A549 (cell line): ENCODE measurements at regions of chr10 and their contacts with region 1.

Region 1: GRCh38 chr10:110610308-110610774 is 33.8 kb upstream of the RBM20 start:
- DNase-seq: peak; percentile 50 to 58
- ATAC-seq: peak; percentile 73 to 80
- H3K4me3 ChIP-seq: no peak overlapping the region
- H3K27ac ChIP-seq: peak overlapping the region in 1 of 2 experiments; percentile 8; a peak in 2 of 6 replicates
- H3K4me1 ChIP-seq: 0 out of 3 replicates have a peak, but pooled peaks cover 8% of the 10 kb centered on the region
- CTCF ChIP-seq: peak; percentile 95
- EP300 ChIP-seq: no peak
- POLR2A ChIP-seq: no peak
- RAD21 ChIP-seq: peak; percentile 96 to 97

Region 2: DNA sequence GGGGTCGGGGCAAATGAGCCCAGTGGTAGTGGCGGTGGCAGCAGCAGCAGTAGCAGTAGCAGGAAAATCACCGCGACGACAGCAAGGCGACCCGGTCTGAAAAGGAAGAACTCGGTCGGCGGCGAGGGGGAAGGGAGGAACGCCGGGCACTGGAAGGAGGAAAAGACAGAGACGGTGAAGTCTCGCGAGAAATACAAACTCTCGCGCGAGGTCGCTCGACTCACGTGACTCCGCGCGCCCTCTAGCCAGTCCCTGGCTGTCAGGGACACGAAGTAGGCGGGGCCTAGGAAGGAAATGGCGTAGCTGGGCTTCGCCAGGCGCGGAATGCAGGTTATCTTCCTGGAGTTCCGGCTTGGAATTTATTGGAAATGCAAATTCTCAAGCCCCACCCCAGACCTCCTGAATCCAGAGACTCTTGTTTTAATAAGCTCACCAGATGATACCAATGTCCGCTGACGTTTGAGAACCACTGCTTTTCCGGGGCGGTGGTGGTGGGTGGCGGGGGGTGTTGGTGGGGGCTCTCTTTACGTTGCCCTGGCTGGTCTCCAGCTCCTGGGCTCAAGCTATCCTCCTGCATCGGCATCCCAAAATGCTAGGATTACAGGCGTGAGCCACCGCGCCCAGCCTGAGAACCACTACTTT is 305.4 kb before region 1 on chr10 and contains the start of gene SMNDC1:
- CTCF ChIA-PET with region 1: interaction called, 12 read pairs
- POLR2A ChIA-PET with region 1: interaction called, 15 read pairs
- DNase-seq: peak; percentile 86 to 99
- ATAC-seq: peak; percentile 91 to 95
- H3K4me3 ChIP-seq: peak within 1 kb of the TSS; percentile 93
- H3K27ac ChIP-seq: peak within 1 kb of the TSS; percentile 97 to 98
- H3K4me1 ChIP-seq: peaks cover 57% of the 10 kb centered on the region
- CTCF ChIP-seq: no peak
- EP300 ChIP-seq: no peak
- POLR2A ChIP-seq: peak; percentile 28; the same call in 1 of the 2 replicates
- RAD21 ChIP-seq: no peak; a peak in 1 of 5 replicates
- polyA plus RNA-seq, gene SMNDC1: 35.4 and 40.2 TPM in 2 replicates

Region 3: DNA sequence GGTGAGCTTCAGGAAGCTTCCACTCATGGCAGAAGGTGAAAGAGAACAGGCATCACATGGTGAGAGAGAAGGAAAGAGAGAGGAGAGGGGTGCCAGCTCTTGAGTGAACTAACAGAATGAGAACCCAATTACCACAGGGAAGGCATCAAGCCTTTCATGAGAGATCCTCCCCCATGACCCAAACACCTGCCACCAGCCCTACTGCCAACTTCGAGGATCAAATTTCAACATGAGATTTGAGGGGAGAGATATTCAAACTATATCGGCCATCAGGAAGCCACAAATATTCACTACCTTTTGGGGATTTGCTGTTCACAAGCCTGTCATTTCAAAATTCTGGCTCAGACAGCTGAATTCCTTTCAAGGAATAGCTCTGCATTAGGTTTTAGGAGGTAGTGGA is 265.7 kb before region 1 on chr10:
- CTCF ChIA-PET with region 1: no interaction called
- POLR2A ChIA-PET with region 1: no interaction called
- DNase-seq: no peak
- ATAC-seq: no peak
- H3K4me3 ChIP-seq: no peak overlapping the region
- H3K27ac ChIP-seq: peak overlapping the region in 1 of 2 experiments; percentile 45; a peak in 2 of 6 replicates
- H3K4me1 ChIP-seq: no peaks in the 10 kb centered on the region
- CTCF ChIP-seq: no peak
- EP300 ChIP-seq: no peak
- POLR2A ChIP-seq: no peak
- RAD21 ChIP-seq: no peak

Region 4: DNA sequence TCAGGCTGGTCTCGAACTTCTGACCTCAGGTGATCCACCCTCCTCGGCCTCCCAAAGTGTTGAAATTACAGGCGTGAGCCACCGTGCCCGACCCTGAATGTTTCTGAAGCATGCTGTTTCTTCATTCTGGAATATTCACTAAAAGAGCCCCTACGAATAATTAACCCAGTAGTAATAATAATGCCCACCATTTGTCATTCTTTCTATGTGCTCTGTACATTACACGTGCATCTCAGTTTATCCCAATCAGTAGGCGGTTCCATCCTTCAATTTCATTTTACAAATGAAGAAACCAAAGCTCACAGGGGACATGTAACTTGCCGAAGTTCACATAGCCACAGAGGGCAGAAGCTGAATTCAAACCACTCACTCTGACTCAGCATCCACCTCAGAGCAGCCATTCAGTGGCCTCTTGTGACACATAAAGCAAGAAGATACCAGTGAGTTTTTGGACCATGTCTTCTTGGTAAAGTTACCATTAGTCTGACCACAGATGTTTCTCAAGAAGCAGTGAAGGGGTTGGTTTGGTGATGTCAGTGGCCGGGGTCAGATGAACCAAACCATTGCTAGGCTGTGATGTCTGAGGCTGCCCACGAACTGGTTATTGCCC is 184.6 kb before region 1 on chr10:
- CTCF ChIA-PET with region 1: no interaction called
- POLR2A ChIA-PET with region 1: no interaction called
- DNase-seq: peak; percentile 76 to 97
- ATAC-seq: peak; percentile 69 to 70
- H3K4me3 ChIP-seq: no peak overlapping the region
- H3K27ac ChIP-seq: peak overlapping the region; percentile 96 to 99
- H3K4me1 ChIP-seq: peaks cover 96% of the 10 kb centered on the region
- CTCF ChIP-seq: no peak
- EP300 ChIP-seq: peak in 1 of 2 experiments; percentile 30; a peak in 1 of 5 replicates
- POLR2A ChIP-seq: no peak
- RAD21 ChIP-seq: no peak; a peak in 1 of 5 replicates

Region 5: GRCh38 chr10:110446954-110447608 is 163.3 kb before region 1 on chr10:
- CTCF ChIA-PET with region 1: no interaction called
- POLR2A ChIA-PET with region 1: no interaction called
- DNase-seq: peak in 1 of 2 experiments; percentile 41
- ATAC-seq: peak; percentile 34 to 68; a peak in 4 of 6 replicates
- H3K4me3 ChIP-seq: no peak overlapping the region
- H3K27ac ChIP-seq: peak overlapping the region; percentile 6 to 71
- H3K4me1 ChIP-seq: peaks cover 11% of the 10 kb centered on the region
- CTCF ChIP-seq: no peak
- EP300 ChIP-seq: no peak
- POLR2A ChIP-seq: no peak
- RAD21 ChIP-seq: no peak

Region 6: GRCh38 chr10:110636932-110637557 is 26.7 kb after region 1 on chr10:
- CTCF ChIA-PET with region 1: interaction called, 10 read pairs
- POLR2A ChIA-PET with region 1: no interaction called
- DNase-seq: no peak
- ATAC-seq: peak; percentile 2 to 13; a peak in 3 of 6 replicates
- H3K4me3 ChIP-seq: no peak overlapping the region
- H3K27ac ChIP-seq: peak overlapping the region; percentile 64 to 71
- H3K4me1 ChIP-seq: peaks cover 49% of the 10 kb centered on the region
- CTCF ChIP-seq: no peak
- EP300 ChIP-seq: no peak
- POLR2A ChIP-seq: no peak
- RAD21 ChIP-seq: no peak

Region 7: DNA sequence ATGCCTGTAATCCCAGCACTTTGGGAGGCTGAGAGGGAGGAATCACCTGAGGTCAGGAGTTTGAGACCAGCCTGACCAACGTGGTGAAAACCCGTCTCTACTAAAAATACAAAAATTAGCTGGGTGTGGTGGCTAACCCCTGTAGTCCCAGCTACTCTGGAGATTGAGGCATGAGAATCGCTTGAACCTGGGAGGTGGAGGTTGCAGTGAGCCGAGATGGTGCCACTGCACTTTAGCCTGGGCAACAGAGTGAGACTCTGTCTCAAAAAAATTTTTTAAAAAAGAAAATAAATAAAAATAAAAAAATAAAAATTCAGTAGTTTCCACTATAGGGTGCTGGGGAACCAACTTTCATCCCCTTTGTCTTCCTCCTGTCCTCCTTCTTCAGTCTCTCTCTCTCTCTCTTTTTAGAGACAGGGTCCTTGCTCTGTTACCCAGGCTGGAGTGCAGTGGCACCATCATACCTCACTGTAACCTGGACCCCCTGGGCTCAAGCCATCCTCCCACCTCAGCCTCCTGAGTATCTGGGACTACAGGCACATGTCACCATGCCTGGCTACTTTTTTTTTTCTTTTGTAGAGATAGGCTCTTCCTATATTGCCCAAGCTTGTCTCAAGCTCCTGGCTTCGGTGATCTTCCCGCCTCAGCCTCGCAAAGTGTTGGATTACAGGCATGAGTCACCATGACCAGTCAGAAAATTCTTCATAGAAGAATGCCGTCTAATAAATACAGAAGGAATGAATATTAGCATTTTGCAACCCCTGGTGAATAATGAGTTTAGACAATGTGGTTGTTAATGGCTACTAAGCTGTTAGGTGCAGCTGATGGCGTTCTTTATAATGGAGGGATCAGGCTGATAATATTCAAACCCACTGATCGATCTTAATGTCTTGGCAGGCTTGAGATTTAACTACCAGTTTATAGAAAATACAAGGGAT is 54.4 kb after region 1 on chr10:
- CTCF ChIA-PET with region 1: interaction called, 88 read pairs
- POLR2A ChIA-PET with region 1: no interaction called
- DNase-seq: peak in 1 of 2 experiments; percentile 80
- ATAC-seq: peak; percentile 89 to 93
- H3K4me3 ChIP-seq: no peak overlapping the region
- H3K27ac ChIP-seq: peak overlapping the region; percentile 77 to 88
- H3K4me1 ChIP-seq: peaks cover 21% of the 10 kb centered on the region
- CTCF ChIP-seq: no peak
- EP300 ChIP-seq: no peak
- POLR2A ChIP-seq: no peak
- RAD21 ChIP-seq: no peak

Region 8: GRCh38 chr10:110671788-110672579 is 61.6 kb after region 1 on chr10:
- CTCF ChIA-PET with region 1: interaction called, 88 read pairs
- POLR2A ChIA-PET with region 1: no interaction called
- DNase-seq: peak; percentile 86 to 88
- ATAC-seq: peak; percentile 99 to 100
- H3K4me3 ChIP-seq: peak overlapping the region; percentile 59
- H3K27ac ChIP-seq: peak overlapping the region; percentile 76 to 91
- H3K4me1 ChIP-seq: no peaks in the 10 kb centered on the region
- CTCF ChIP-seq: peak; percentile 78
- EP300 ChIP-seq: no peak
- POLR2A ChIP-seq: peak; percentile 33
- RAD21 ChIP-seq: peak; percentile 60 to 67

Region 9: DNA sequence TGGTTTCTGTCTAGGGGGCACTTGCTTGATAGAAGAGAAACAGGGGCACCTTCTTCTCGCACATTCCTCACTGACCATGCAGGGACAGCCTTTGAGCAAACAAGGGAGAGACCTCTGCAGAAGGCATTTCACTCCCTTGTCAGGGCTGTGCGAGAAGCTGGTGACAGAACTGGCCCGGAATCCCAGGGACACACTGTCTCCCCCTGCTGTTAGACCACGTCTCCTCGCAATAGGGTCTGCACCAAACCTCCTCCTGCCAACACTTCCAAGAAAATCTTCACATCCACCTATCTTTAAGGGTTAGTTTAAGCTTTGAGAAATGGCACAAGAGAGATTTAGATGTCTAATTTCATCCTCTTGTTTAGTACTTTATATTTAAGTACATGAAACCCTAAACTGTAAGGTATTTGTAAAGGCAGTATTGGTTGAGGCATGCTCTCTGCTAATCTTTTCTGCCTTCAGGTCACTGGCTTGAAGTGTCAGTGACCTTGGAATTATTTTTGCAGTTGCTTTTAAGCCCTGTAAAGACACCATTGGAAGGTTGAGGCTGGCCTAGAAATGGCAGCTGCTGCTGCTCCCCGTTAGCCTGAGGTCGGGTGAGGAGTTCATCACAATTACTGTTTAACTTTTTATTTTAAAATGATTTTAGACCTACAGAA is 70.8 kb after region 1 on chr10:
- CTCF ChIA-PET with region 1: interaction called, 88 read pairs
- POLR2A ChIA-PET with region 1: no interaction called
- DNase-seq: peak; percentile 57 to 81
- ATAC-seq: peak; percentile 92 to 96
- H3K4me3 ChIP-seq: no peak overlapping the region
- H3K27ac ChIP-seq: no peak overlapping the region
- H3K4me1 ChIP-seq: peaks cover 7% of the 10 kb centered on the region; the same call in 2 of the 3 replicates
- CTCF ChIP-seq: peak; percentile 64
- EP300 ChIP-seq: no peak
- POLR2A ChIP-seq: no peak
- RAD21 ChIP-seq: peak; percentile 59 to 75; a peak in 4 of 5 replicates

Region 10: DNA sequence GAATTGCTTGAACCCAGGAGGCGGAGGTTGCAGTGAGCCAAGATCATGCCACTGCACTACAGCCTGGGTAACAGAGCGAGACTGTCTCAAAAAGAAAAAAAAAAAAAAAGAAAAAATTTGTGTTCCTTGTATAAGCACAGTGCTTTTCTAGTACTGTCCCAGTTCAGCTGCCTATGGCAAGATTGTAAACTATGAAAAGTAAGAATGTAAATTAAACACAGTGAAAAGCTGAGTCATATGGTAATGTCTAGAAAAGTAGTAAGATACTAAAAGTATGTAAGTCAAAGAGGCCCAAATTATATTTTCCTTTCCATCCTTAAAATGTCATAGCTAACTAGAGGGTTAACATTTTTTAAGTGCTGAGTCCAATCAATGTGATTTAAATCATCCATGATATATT is 76.6 kb after region 1 on chr10:
- CTCF ChIA-PET with region 1: interaction called, 44 read pairs
- POLR2A ChIA-PET with region 1: no interaction called
- DNase-seq: no peak
- ATAC-seq: no peak
- H3K4me3 ChIP-seq: no peak overlapping the region
- H3K27ac ChIP-seq: no peak overlapping the region
- H3K4me1 ChIP-seq: peaks cover 20% of the 10 kb centered on the region; the same call in 2 of the 3 replicates
- CTCF ChIP-seq: no peak
- EP300 ChIP-seq: no peak
- POLR2A ChIP-seq: no peak
- RAD21 ChIP-seq: no peak